A549 (cell line): ENCODE measurements at regions of chr9 and their contacts with region 1.

Region 1: GRCh38 chr9:114291064-114291474 is 31.8 kb upstream of the ORM1 start:
- DNase-seq: peak; percentile 57 to 64
- ATAC-seq: peak; percentile 32 to 69; a peak in 4 of 6 replicates
- H3K4me3 ChIP-seq: no peak overlapping the region
- H3K27ac ChIP-seq: peak overlapping the region; percentile 63 to 88
- H3K4me1 ChIP-seq: peaks cover 39% of the 10 kb centered on the region
- CTCF ChIP-seq: peak; percentile 91
- EP300 ChIP-seq: no peak
- POLR2A ChIP-seq: no peak
- RAD21 ChIP-seq: peak; percentile 94 to 96

Region 2: DNA sequence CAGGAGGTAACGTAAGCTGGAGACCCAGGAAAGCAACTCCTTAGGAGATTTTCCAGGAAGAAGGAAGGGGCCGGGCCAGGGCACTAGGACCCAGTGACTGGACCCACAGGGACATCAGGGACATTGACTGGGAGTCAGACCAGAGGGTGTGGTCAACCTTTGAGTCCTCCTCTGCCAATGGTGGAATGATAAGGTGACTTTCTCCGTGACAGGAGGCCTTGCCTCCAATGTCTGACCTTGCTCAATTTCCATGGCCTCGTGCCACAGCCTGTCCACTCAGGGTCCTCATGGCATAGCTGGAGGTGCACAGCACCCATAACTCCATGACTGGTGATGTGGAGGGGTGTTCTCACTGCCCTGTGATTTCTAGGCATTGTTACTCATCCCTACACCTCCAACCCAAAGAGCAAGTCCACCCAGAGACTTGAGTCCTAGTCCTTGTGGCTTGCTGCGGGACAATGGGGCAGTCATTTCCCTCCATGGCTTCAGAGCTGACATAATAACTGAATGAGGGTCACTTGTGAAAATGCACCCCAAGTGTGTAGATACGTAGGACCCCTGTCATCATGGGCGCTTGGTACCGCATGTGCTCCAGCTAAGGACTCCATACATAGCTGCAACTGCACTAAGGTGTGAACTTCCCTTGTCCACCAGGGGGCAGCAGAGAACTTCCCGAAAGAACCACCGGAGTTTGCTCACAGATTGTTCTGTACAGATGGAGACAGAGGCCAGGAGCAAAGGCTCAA is 208.9 kb before region 1 on chr9:
- CTCF ChIA-PET with region 1: interaction called, 191 read pairs
- POLR2A ChIA-PET with region 1: interaction called, 3 read pairs
- DNase-seq: peak; percentile 92 to 94
- ATAC-seq: peak; percentile 74 to 83
- H3K4me3 ChIP-seq: no peak overlapping the region
- H3K27ac ChIP-seq: peak overlapping the region; percentile 93 to 94
- H3K4me1 ChIP-seq: peaks cover 75% of the 10 kb centered on the region
- CTCF ChIP-seq: peak; percentile 92
- EP300 ChIP-seq: no peak
- POLR2A ChIP-seq: no peak
- RAD21 ChIP-seq: peak; percentile 93 to 95

Region 3: GRCh38 chr9:114098016-114098935 is 192.8 kb before region 1 on chr9:
- CTCF ChIA-PET with region 1: interaction called, 24 read pairs
- POLR2A ChIA-PET with region 1: no interaction called
- DNase-seq: peak; percentile 70 to 75
- ATAC-seq: peak; percentile 81 to 87
- H3K4me3 ChIP-seq: peak overlapping the region; percentile 84
- H3K27ac ChIP-seq: peak overlapping the region; percentile 71 to 91
- H3K4me1 ChIP-seq: peaks cover 27% of the 10 kb centered on the region
- CTCF ChIP-seq: no peak
- EP300 ChIP-seq: no peak
- POLR2A ChIP-seq: no peak
- RAD21 ChIP-seq: no peak

Region 4: GRCh38 chr9:114141553-114142402 is 149.3 kb before region 1 on chr9:
- CTCF ChIA-PET with region 1: interaction called, 11 read pairs
- POLR2A ChIA-PET with region 1: no interaction called
- DNase-seq: no peak
- ATAC-seq: no peak; a peak in 1 of 6 replicates
- H3K4me3 ChIP-seq: no peak overlapping the region
- H3K27ac ChIP-seq: no peak overlapping the region
- H3K4me1 ChIP-seq: 0 out of 3 replicates have a peak, but pooled peaks cover 7% of the 10 kb centered on the region
- CTCF ChIP-seq: no peak
- EP300 ChIP-seq: no peak
- POLR2A ChIP-seq: no peak
- RAD21 ChIP-seq: no peak

Region 5: DNA sequence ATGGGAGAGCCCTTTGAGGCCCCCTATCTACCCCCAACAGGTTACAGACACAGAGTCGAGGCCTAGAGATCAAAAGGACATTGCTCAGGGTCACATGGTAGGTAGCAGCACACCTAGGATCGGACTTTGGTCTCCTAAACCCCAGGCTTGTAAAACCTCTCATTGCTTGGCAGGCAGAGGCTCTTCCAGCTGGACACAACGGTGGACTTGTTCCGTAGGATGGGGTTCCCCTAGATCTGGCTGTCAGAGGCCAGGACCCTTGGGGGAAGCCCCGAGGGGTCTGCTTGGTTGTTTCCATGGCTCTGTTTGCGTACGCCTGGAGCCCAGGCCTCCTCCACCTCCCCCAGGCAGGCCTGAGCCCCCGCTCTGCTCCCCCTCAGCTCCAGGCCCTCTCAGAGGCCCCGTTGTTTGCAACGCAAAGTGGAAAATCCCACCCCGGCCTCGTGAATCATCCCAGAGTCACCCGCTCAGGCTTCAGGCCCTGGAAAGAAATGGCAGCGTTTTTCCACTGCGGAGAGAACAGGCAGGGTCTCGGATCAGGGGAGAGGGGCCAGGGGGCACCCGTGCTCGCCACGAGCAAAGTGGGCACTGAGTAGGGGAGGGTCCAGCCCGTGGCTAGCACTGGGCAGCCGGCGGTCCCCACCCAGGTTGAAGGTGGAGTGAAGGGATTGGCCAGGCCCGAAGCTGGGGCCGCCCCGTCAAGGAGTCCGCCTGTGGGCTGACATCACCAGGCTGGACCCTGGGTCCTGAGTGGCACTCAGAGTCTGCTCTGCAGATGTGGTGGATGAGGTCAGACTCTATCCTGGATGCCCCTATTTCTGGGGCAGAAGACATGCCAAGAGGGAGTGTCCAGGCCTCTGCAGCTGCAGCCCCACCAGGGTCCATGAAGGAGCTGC is 115.9 kb before region 1 on chr9:
- CTCF ChIA-PET with region 1: interaction called, 21 read pairs
- POLR2A ChIA-PET with region 1: no interaction called
- DNase-seq: no peak
- ATAC-seq: peak in 1 of 2 experiments; percentile 27; a peak in 3 of 6 replicates
- H3K4me3 ChIP-seq: no peak overlapping the region
- H3K27ac ChIP-seq: peak overlapping the region in 1 of 2 experiments; percentile 32; a peak in 1 of 6 replicates
- H3K4me1 ChIP-seq: peaks cover 30% of the 10 kb centered on the region
- CTCF ChIP-seq: no peak
- EP300 ChIP-seq: no peak
- POLR2A ChIP-seq: no peak
- RAD21 ChIP-seq: no peak

Region 6: GRCh38 chr9:114238891-114239875 is 51.9 kb before region 1 on chr9:
- CTCF ChIA-PET with region 1: interaction called, 31 read pairs
- POLR2A ChIA-PET with region 1: no interaction called
- DNase-seq: peak; percentile 21 to 28
- ATAC-seq: peak in 1 of 2 experiments; percentile 57; a peak in 3 of 6 replicates
- H3K4me3 ChIP-seq: no peak overlapping the region
- H3K27ac ChIP-seq: no peak overlapping the region
- H3K4me1 ChIP-seq: no peaks in the 10 kb centered on the region
- CTCF ChIP-seq: no peak
- EP300 ChIP-seq: no peak
- POLR2A ChIP-seq: no peak
- RAD21 ChIP-seq: peak; percentile 10 to 31; a peak in 2 of 5 replicates

Region 7: GRCh38 chr9:114271641-114272081 is 19.4 kb before region 1 on chr9:
- CTCF ChIA-PET with region 1: interaction called, 47 read pairs
- POLR2A ChIA-PET with region 1: no interaction called
- DNase-seq: peak in 1 of 2 experiments; percentile 42
- ATAC-seq: peak in 1 of 2 experiments; percentile 70; a peak in 3 of 6 replicates
- H3K4me3 ChIP-seq: no peak overlapping the region
- H3K27ac ChIP-seq: no peak overlapping the region
- H3K4me1 ChIP-seq: peaks cover 14% of the 10 kb centered on the region
- CTCF ChIP-seq: peak; percentile 41
- EP300 ChIP-seq: no peak
- POLR2A ChIP-seq: no peak
- RAD21 ChIP-seq: peak; percentile 63 to 64

Region 8: DNA sequence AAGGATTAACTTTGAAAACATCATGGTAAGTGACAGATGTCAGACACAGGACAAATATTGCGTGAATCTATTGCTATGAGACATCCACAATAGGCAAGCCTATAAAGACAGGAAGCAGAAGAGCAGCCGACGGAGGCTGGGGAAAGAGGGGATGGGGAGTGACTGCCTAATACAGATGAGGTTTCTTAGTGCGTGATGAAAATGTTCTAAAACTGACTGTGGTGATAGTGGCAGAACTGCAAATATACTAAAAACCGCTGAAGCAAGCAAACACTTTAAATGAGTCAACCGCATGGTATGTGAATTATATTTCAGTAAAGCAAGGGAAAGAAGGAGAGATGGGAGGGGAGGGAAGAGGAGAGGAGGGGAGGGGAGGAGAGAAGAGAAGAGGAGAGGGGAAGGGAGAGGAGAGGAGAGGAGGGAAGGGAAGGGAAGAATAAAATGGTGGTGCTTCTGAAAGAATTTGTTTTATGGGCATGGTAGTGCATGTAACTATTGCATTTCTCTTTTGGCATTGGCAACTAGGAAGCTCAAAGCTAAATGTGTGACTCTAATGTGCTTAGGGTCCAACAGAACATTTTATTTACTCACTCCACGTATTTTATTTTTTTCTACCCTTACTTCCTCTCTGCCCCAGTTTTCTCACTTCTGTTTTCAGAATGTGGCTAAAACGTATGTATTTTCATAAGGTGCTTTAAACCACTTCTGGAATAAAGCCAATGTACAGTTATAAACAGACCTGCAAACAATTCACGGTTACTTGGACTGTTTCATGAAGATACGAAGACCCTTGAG is 75.5 kb after region 1 on chr9:
- CTCF ChIA-PET with region 1: no interaction called
- POLR2A ChIA-PET with region 1: no interaction called
- DNase-seq: peak in 1 of 2 experiments; percentile 9
- ATAC-seq: peak; percentile 25 to 50; a peak in 4 of 6 replicates
- H3K4me3 ChIP-seq: no peak overlapping the region
- H3K27ac ChIP-seq: peak overlapping the region; percentile 33 to 50; a peak in 3 of 6 replicates
- H3K4me1 ChIP-seq: peaks cover 21% of the 10 kb centered on the region
- CTCF ChIP-seq: no peak
- EP300 ChIP-seq: no peak
- POLR2A ChIP-seq: no peak
- RAD21 ChIP-seq: no peak

Region 9: GRCh38 chr9:114465903-114466530 is 174.9 kb after region 1 on chr9:
- CTCF ChIA-PET with region 1: no interaction called
- POLR2A ChIA-PET with region 1: no interaction called
- DNase-seq: no peak
- ATAC-seq: no peak
- H3K4me3 ChIP-seq: no peak overlapping the region
- H3K27ac ChIP-seq: no peak overlapping the region
- H3K4me1 ChIP-seq: no peaks in the 10 kb centered on the region
- CTCF ChIP-seq: no peak
- EP300 ChIP-seq: no peak
- POLR2A ChIP-seq: no peak
- RAD21 ChIP-seq: no peak